Tibial artery (tissue), 4 donors: ENCODE measurements at regions of chrX and their contacts with region 1.

Region 1: DNA sequence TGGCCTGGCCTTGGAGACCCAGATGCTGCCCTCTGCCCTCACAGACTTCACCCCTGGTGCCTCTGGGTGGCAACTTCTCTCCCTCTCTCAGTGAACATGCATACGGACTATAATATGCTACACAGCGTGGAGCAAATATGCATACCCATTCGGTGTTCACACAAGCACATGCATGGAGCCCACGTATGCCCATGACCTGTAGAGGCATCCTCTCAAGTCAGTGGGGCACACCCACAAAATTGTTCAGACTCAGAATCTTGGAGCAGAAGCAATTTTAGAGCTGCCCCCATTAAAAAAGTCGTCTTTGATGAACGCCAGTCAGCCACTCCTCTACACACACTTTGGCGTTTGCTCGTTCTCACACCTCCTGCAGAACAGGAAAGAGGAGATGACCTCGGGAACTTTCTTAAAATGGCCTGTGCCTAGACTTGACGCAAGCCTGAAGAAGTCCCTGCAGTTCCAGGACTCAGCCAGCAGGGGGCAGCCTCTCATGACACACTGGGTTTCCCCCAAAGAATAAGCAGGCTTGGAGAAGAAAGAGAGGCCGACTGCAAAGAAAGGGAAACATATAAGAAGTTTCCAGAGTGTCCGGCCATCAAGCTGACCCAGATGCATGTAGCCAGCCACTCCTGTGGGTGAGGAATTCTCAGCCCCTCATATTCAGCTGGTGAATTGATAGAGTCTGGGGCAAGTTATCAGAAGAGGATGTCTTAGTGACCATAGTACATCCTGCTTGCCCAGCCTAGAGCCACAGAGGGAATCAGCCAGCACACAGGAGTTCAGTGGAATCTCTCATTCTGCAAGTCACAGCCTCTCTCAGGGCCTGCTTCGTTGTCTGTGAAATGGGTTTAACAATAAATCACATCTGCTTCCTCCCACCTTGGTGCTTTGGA is 17.3 kb downstream of the APLN start:
- DNase-seq: peak; percentile 54 to 78
- H3K4me3 ChIP-seq: no peak overlapping the region
- H3K27ac ChIP-seq: no peak overlapping the region
- H3K4me1 ChIP-seq: no peaks in the 10 kb centered on the region
- H3K27me3 ChIP-seq: no peaks in the 10 kb centered on the region
- CTCF ChIP-seq: peak; percentile 82 to 86

Region 2: DNA sequence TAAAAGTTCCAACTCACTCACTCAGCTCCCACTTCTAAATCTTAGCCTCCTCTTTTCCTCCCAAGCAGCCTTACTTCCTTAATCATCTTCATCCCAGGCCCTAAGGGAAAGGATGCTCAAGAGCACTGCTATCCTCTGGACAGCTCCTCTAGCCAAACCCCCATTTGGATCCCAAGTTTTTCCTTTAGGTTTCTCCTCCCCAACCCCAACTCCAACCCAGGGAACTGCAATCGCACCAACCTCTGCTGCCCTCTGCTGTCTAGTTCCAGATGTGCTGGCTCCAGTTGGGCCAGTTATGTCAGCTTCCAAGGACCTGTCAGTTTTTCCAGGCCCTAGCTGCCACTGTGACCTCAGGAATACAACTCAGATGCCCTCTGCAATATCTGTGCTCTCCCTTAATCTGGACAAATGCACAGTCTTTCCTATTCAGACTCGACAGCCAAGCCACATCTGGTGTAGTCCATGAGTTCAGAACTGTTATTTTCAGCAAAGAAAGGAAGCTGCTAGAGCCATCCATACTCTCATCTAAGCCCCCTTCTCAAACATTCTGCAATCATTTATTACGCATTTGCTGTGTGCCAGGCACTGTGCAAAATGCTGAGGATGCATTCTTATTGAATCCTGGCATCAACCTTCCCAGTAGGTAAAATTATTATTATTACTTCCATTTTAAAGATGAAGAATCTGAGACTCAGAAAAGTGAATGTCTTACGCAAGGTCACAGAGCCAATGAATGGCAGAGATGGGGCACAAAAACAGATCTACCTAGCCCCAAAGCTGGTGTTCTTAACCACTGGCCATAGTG is 89.0 kb after region 1 on chrX:
- intact Hi-C with region 1: loop called (anchors 2 kb)
- DNase-seq: peak in 1 of 2 donors; percentile 44
- H3K4me3 ChIP-seq: no peak overlapping the region
- H3K27ac ChIP-seq: no peak overlapping the region
- H3K4me1 ChIP-seq: no peaks in the 10 kb centered on the region
- H3K27me3 ChIP-seq: no peaks in the 10 kb centered on the region
- CTCF ChIP-seq: peak; percentile 66 to 83